ENCODE measurements at regions of chr15 and their contacts with region 1.

Region 1: GRCh38 chr15:68383161-68384074 is 48.5 kb downstream of the ITGA11 start:
- DNase-seq: peak; percentile 75
- H3K4me3 Mint-ChIP-seq: no peak overlapping the region
- H3K27ac Mint-ChIP-seq: no peak overlapping the region
- H3K4me1 Mint-ChIP-seq: peaks cover 27% of the 10 kb centered on the region
- H3K27me3 Mint-ChIP-seq: no peaks in the 10 kb centered on the region

Region 2: GRCh38 chr15:68307131-68307928 is 76.1 kb before region 1 on chr15:
- CTCF ChIA-PET with region 1: interaction called, 18 read pairs
- POLR2A ChIA-PET with region 1: no interaction called
- DNase-seq: peak; percentile 4
- H3K4me3 Mint-ChIP-seq: no peak overlapping the region
- H3K27ac Mint-ChIP-seq: no peak overlapping the region
- H3K4me1 Mint-ChIP-seq: peaks cover 14% of the 10 kb centered on the region
- H3K27me3 Mint-ChIP-seq: no peaks in the 10 kb centered on the region

Region 3: GRCh38 chr15:68365140-68365745 is 18.2 kb before region 1 on chr15:
- CTCF ChIA-PET with region 1: no interaction called
- POLR2A ChIA-PET with region 1: no interaction called
- DNase-seq: no peak
- H3K4me3 Mint-ChIP-seq: no peak overlapping the region
- H3K27ac Mint-ChIP-seq: peak overlapping the region; percentile 71
- H3K4me1 Mint-ChIP-seq: peaks cover 23% of the 10 kb centered on the region
- H3K27me3 Mint-ChIP-seq: peaks cover 1% of the 10 kb centered on the region

Measured in activated CD4-positive, alpha-beta T cell treated with anti-CD3 and anti-CD28 coated beads, Interleukin-2, amount 10 ng/mL, durations not matched to agents 7 days and 5 days (primary cell).